ENCODE measurements at regions of chr11 and their contacts with region 1.

Region 1: DNA sequence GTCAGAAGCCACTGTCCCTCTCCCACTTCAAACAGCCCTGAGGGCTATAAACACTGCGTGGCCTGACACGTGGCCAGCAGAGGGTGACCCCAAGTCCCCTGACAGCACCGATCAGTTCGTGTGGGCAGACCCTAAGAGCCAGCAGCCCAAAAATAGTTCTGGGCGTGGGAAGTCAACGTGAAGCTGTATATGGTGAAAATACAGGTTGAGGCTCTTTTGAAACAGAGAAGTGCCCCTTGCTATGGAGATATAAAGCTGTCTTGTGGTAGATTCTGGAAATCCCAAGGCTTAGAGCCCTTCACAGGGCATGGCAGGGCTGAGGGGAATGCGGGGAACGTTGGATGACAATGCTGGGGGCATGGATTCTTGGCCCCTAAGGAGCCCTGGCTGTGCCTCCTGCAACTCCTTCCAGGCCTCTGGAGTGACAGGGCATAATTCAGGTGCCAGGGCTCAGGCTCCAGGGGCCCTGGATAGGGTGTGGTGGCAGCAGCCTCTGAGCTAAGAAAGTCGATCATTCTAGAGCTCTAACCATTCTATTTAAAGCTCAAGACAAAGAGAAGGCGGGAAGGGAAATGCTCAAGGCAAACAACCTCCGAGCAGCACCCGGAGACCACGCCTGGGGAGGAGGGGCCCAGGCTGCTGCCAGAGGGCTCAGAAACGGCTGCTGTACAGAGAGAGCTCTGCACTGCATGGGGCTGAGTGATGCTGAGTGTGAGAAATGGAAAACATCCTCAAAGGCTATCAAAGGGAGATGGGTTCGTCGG is 60.4 kb upstream of the CD5 start:
- DNase-seq: peak; percentile 63 to 94 (median 85)
- ATAC-seq: peak; percentile 98
- H3K4me3 ChIP-seq: peak overlapping the region; percentile 10 to 17
- H3K4me3 Mint-ChIP-seq: peak overlapping the region; percentile 75
- H3K27ac ChIP-seq: peak overlapping the region; percentile 60 to 91
- H3K27ac Mint-ChIP-seq: peak overlapping the region; percentile 98
- H3K4me1 ChIP-seq: peaks cover 46% of the 10 kb centered on the region
- H3K4me1 Mint-ChIP-seq: peaks cover 48% of the 10 kb centered on the region
- H3K27me3 ChIP-seq: no peaks in the 10 kb centered on the region
- H3K27me3 Mint-ChIP-seq: no peaks in the 10 kb centered on the region
- CTCF ChIP-seq: no peak

Region 2: GRCh38 chr11:60985991-60986915 is 55.7 kb before region 1 on chr11:
- CTCF ChIA-PET with region 1: interaction called, 3 read pairs
- POLR2A ChIA-PET with region 1: interaction called, 31 read pairs
- intact Hi-C with region 1: loop called (anchors 1 kb)
- DNase-seq: peak; percentile 81 to 99 (median 92)
- ATAC-seq: peak; percentile 86
- H3K4me3 ChIP-seq: peak overlapping the region; percentile 7 to 17
- H3K4me3 Mint-ChIP-seq: peak overlapping the region; percentile 68
- H3K27ac ChIP-seq: peak overlapping the region; percentile 72 to 86
- H3K27ac Mint-ChIP-seq: peak overlapping the region; percentile 96
- H3K4me1 ChIP-seq: peaks cover 83% of the 10 kb centered on the region
- H3K4me1 Mint-ChIP-seq: peaks cover 90% of the 10 kb centered on the region
- H3K27me3 ChIP-seq: no peaks in the 10 kb centered on the region
- H3K27me3 Mint-ChIP-seq: no peaks in the 10 kb centered on the region
- CTCF ChIP-seq: no peak

Region 3: DNA sequence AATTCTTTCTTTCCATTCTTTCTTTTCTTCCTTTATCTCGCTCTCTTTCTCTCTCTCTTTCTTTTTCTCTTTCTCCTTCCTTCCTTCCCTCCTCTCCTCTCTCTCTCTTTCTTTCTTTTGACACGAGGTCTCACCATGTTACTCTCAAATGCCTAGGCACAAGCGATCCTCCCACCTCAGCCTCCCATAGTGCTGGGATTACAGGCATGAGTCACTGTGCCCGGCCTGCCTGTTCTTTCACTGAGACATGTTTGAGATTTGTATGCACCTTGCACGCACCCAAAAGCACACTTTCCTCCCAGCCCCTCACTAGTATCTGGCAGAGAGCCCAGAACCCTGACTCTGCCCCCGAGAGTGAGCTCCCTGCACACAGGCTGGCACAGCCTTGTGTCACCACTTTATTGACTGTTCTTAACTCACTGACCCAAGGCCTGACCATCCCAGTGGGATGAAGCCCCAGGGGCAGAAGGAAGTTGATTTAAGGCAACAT is 13.6 kb before region 1 on chr11:
- CTCF ChIA-PET with region 1: interaction called, 14 read pairs
- POLR2A ChIA-PET with region 1: interaction called, 54 read pairs
- intact Hi-C with region 1: loop called (anchors 1 kb)
- DNase-seq: peak in 8 of 9 experiments; percentile 29 to 80 (median 72)
- ATAC-seq: peak; percentile 19
- H3K4me3 ChIP-seq: peak overlapping the region; percentile 21 to 38
- H3K4me3 Mint-ChIP-seq: peak overlapping the region; percentile 83
- H3K27ac ChIP-seq: peak overlapping the region; percentile 44 to 66
- H3K27ac Mint-ChIP-seq: peak overlapping the region; percentile 95
- H3K4me1 ChIP-seq: peaks cover 61% of the 10 kb centered on the region
- H3K4me1 Mint-ChIP-seq: peaks cover 66% of the 10 kb centered on the region
- H3K27me3 ChIP-seq: no peaks in the 10 kb centered on the region
- H3K27me3 Mint-ChIP-seq: no peaks in the 10 kb centered on the region
- CTCF ChIP-seq: no peak

Region 4: GRCh38 chr11:61061081-61061826 is 19.3 kb after region 1 on chr11:
- CTCF ChIA-PET with region 1: interaction called, 5 read pairs
- POLR2A ChIA-PET with region 1: interaction called, 9 read pairs
- intact Hi-C with region 1: loop called (anchors 1 to 2 kb)
- DNase-seq: peak in 8 of 9 experiments; percentile 55 to 94 (median 70)
- ATAC-seq: peak; percentile 82
- H3K4me3 ChIP-seq: peak overlapping the region; percentile 8 to 16
- H3K4me3 Mint-ChIP-seq: peak overlapping the region; percentile 76
- H3K27ac ChIP-seq: peak overlapping the region; percentile 9 to 81
- H3K27ac Mint-ChIP-seq: peak overlapping the region; percentile 92
- H3K4me1 ChIP-seq: peaks cover 37% of the 10 kb centered on the region
- H3K4me1 Mint-ChIP-seq: peaks cover 57% of the 10 kb centered on the region
- H3K27me3 ChIP-seq: no peaks in the 10 kb centered on the region
- H3K27me3 Mint-ChIP-seq: no peaks in the 10 kb centered on the region
- CTCF ChIP-seq: no peak

Region 5: DNA sequence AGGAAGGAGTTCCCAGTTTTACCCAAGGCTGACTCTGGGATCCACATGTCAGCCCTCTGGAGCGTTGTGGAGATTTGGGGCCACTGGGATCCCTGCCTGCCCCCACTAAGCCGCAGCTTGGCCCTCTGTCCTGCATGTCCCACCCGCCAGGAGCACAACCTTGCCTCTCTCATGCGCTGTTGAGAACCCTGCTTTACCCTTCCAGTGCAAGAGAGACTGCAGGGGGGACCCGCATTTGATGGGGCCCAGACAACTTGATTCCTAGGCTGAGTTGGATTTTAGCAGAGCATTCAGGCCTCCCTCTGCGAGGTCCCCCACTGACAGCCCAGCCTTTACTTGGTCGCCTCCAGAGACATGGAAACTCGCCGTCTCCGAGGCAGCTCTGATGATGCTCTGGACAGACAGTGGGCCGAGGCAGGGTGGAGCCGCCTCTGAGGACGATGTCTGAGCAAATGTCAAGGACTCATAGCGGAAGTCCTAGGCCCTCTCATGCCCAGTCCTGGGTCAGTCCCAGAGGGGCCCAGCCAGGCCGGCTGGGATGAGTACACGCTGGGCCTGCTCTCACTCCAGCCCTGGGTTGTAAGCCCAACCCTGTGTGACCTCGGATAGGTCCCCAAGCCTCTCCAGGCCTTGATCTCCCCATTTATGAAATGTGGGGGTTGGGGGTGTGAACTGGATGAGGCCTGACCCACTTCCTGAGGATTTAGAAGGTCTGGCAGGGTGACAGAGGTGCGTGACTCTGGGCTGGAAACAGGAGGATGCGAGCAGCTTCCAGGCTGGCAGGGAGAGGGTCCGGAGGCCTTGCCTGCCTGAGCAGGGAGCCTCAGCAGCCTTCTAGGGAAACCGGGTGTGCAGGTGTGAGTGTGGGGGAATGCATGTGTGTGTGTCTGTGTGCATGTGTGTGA is 61.0 kb after region 1 on chr11:
- CTCF ChIA-PET with region 1: no interaction called
- POLR2A ChIA-PET with region 1: interaction called, 13 read pairs
- intact Hi-C with region 1: loop called (anchors 2 to 5 kb)
- DNase-seq: peak in 2 of 9 experiments; percentile 49 to 72
- ATAC-seq: peak; percentile 31
- H3K4me3 ChIP-seq: peak overlapping the region; percentile 87 to 91
- H3K4me3 Mint-ChIP-seq: no peak overlapping the region
- H3K27ac ChIP-seq: peak overlapping the region; percentile 90 to 93
- H3K27ac Mint-ChIP-seq: no peak overlapping the region
- H3K4me1 ChIP-seq: peaks cover 48% of the 10 kb centered on the region
- H3K4me1 Mint-ChIP-seq: peaks cover 40% of the 10 kb centered on the region
- H3K27me3 ChIP-seq: no peaks in the 10 kb centered on the region
- H3K27me3 Mint-ChIP-seq: no peaks in the 10 kb centered on the region
- CTCF ChIP-seq: no peak

Region 6: DNA sequence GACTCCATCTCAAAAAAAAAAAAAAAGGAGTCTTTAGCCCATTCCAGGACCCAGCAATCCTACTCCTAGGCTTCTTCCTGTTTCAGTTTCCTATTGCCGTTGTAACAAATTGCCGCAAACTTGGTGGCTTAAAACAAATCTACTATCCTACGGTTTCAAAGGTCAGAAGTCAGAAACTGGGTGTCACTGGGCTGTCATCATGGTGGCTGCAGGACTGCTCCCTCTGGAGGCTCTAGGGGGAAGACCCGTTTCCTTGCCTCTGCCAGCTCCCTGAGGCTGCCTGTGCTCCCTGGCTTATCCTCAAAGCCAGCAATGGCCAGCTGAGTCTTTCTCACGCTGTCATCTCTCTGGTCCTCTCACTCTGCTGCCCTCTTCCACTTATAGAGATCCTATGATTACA is 629.6 kb after region 1 on chr11:
- CTCF ChIA-PET with region 1: no interaction called
- POLR2A ChIA-PET with region 1: no interaction called
- intact Hi-C with region 1: no loop called
- DNase-seq: no peak
- ATAC-seq: no peak
- H3K4me3 ChIP-seq: no peak overlapping the region
- H3K4me3 Mint-ChIP-seq: no peak overlapping the region
- H3K27ac ChIP-seq: no peak overlapping the region
- H3K27ac Mint-ChIP-seq: no peak overlapping the region
- H3K4me1 ChIP-seq: no peaks in the 10 kb centered on the region
- H3K4me1 Mint-ChIP-seq: no peaks in the 10 kb centered on the region
- H3K27me3 ChIP-seq: peaks cover 3 to 4% of the 10 kb centered on the region in 2 experiments
- H3K27me3 Mint-ChIP-seq: peaks cover 29% of the 10 kb centered on the region
- CTCF ChIP-seq: no peak